Activated CD4-positive, alpha-beta memory T cell treated with anti-CD3 and anti-CD28 coated beads, Interleukin-2, amount 10 ng/mL, durations not matched to agents 7 days and 5 days (primary cell): ENCODE measurements at regions of chr1 and their contacts with region 1.

Region 1: GRCh38 chr1:204565617-204566582 is 49.7 kb downstream of the MDM4 start:
- DNase-seq: peak; percentile 67
- H3K4me3 Mint-ChIP-seq: no peak overlapping the region
- H3K27ac Mint-ChIP-seq: peak overlapping the region; percentile 73
- H3K4me1 Mint-ChIP-seq: peaks cover 51% of the 10 kb centered on the region
- H3K27me3 Mint-ChIP-seq: no peaks in the 10 kb centered on the region

Region 2: DNA sequence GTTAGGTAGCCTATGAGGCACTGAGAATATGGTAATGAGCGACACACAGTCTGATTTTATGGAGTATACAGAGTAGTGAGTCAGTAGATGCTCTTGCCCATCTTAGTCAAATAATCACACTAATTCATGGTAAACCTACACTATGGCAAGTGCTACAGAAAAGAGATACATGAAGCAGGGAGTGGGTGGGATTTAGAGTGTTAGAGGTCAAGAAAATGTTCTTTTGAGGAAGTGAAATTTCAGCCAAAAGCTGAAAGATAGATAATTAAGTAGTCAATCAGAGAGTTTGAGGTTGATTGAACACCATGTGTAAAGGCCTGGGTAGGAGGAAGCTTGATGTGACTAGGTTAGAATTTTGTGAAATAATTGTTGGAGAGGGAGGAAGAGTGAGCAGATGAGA is 35.0 kb before region 1 on chr1:
- CTCF ChIA-PET with region 1: interaction called, 14 read pairs
- POLR2A ChIA-PET with region 1: interaction called, 4 read pairs
- DNase-seq: no peak
- H3K4me3 Mint-ChIP-seq: no peak overlapping the region
- H3K27ac Mint-ChIP-seq: no peak overlapping the region
- H3K4me1 Mint-ChIP-seq: no peaks in the 10 kb centered on the region
- H3K27me3 Mint-ChIP-seq: no peaks in the 10 kb centered on the region

Region 3: DNA sequence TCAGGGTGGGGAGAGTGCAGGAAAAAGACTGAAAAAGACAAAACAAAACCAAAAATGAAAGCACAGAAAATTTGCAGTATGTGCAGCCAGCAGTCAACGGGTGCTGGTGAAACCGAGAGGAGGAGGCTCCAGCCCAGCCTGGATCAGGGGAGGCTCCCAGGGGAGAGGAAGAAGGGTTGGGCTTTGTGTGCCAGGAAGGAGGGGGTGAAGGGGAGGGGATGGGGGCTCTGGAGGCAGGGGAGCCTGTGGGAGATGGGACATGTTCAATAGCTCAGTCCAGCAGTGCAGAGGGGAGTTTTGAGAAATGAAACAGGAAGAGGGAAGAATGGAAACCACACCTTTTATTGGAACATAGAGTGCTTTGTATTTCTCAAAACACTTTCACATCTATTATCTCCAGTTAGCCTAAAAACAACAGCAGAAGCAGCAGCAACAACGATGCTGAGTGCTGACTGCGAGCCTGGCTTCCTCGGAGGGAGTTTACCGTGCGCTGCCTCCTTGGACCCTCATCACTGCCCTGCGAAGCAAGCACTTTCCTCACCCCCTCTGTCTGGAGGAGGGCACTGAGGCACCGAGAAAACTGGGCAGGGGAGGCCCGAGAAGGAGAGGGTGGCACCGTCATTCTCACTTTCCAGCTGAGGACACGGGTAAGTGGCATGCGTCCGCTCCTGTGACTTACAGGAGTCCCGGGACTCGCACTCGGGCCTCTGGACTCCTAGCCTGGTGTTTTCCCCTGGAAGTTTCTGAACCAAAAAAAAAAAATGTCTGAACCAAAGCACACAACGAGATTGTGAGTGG is 13.2 kb after region 1 on chr1:
- CTCF ChIA-PET with region 1: interaction called, 35 read pairs
- POLR2A ChIA-PET with region 1: interaction called, 9 read pairs
- DNase-seq: peak; percentile 55
- H3K4me3 Mint-ChIP-seq: peak overlapping the region; percentile 74
- H3K27ac Mint-ChIP-seq: peak overlapping the region; percentile 88
- H3K4me1 Mint-ChIP-seq: peaks cover 27% of the 10 kb centered on the region
- H3K27me3 Mint-ChIP-seq: no peaks in the 10 kb centered on the region

Region 4: GRCh38 chr1:204763706-204764427 is 198.0 kb after region 1 on chr1:
- CTCF ChIA-PET with region 1: interaction called, 87 read pairs
- POLR2A ChIA-PET with region 1: interaction called, 4 read pairs
- DNase-seq: peak; percentile 77
- H3K4me3 Mint-ChIP-seq: no peak overlapping the region
- H3K27ac Mint-ChIP-seq: no peak overlapping the region
- H3K4me1 Mint-ChIP-seq: peaks cover 10% of the 10 kb centered on the region
- H3K27me3 Mint-ChIP-seq: peaks cover 41% of the 10 kb centered on the region